G401 (cell line): ENCODE measurements at regions of chr1 and their contacts with region 1.

Region 1: GRCh38 chr1:70509996-70510876 is 99.2 kb downstream of the CTH start:
- DNase-seq: peak; percentile 72

Region 2: DNA sequence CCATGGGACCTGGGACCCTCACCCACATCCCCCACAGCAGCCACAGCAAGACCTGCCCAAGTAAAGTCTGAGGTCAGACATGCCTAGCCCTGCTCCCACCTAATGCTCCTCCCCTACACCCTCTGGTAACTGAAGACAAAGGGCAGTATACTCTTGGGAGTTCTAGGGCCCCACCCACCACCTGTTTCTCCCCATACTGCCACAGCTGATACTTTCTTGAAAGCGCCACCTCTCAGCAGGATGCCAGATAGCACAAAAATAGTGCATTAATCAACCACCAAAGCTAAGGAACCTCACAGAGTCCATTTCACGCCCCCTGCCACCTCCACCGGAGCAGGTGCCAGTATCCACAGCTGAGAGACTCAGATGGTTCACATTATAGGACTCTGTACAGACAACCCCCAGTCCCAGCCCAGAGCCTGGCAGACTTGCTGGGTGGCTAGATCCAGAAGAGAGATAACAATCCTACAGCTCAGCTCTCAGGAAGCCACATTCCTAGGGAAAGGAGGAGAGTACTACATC is 542.9 kb before region 1 on chr1:
- in situ Hi-C with region 1: no loop called
- DNase-seq: no peak

Region 3: GRCh38 chr1:70142075-70142474 is 368.2 kb before region 1 on chr1:
- in situ Hi-C with region 1: loop called (anchors 25 kb)
- DNase-seq: peak; percentile 10

Region 4: DNA sequence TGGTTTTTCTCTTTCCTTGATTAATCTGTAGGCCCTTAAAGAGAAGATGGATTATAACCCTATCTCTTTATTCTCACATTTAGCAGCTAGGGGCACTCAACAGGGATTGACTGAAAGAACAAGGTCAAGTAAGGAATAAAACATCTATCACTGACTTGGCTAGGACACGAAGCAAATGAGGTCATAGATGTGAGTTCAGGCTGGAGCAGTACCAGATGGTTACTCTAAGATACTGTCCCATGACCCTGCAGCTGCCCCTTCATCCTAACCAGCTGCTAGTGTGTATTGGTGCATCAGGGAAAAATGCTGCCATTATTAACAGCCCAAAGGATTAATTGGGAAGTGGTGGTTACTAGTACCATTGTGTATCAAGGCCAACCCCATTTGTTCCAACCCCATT is 122.8 kb after region 1 on chr1:
- in situ Hi-C with region 1: no loop called
- DNase-seq: no peak